ENCODE measurements at regions of chr11 and their contacts with region 1.

Region 1: GRCh38 chr11:1652771-1653540 is 23.4 kb downstream of the KRTAP5-5 start:
- DNase-seq: peak; percentile 60 to 86 (median 74)
- ATAC-seq: peak; percentile 98
- H3K4me3 ChIP-seq: no peak overlapping the region
- H3K4me3 Mint-ChIP-seq: no peak overlapping the region
- H3K27ac ChIP-seq: no peak overlapping the region
- H3K27ac Mint-ChIP-seq: no peak overlapping the region
- H3K4me1 ChIP-seq: peaks cover 6% of the 10 kb centered on the region
- H3K4me1 Mint-ChIP-seq: no peaks in the 10 kb centered on the region
- H3K27me3 ChIP-seq: no peaks in the 10 kb centered on the region
- H3K27me3 Mint-ChIP-seq: peaks cover 12% of the 10 kb centered on the region
- CTCF ChIP-seq: peak; percentile 98

Region 2: GRCh38 chr11:1727096-1727690 is 74.2 kb after region 1 on chr11:
- CTCF ChIA-PET with region 1: no interaction called
- POLR2A ChIA-PET with region 1: no interaction called
- intact Hi-C with region 1: no loop called
- DNase-seq: no peak
- ATAC-seq: no peak
- H3K4me3 ChIP-seq: no peak overlapping the region
- H3K4me3 Mint-ChIP-seq: no peak overlapping the region
- H3K27ac ChIP-seq: no peak overlapping the region
- H3K27ac Mint-ChIP-seq: no peak overlapping the region
- H3K4me1 ChIP-seq: peaks cover 7% of the 10 kb centered on the region
- H3K4me1 Mint-ChIP-seq: peaks cover 17% of the 10 kb centered on the region
- H3K27me3 ChIP-seq: peaks cover 9 to 19% of the 10 kb centered on the region in 2 experiments
- H3K27me3 Mint-ChIP-seq: peaks cover 44% of the 10 kb centered on the region
- CTCF ChIP-seq: no peak

Region 3: GRCh38 chr11:1832211-1832919 is 179.4 kb after region 1 on chr11:
- CTCF ChIA-PET with region 1: interaction called, 12 read pairs
- POLR2A ChIA-PET with region 1: interaction called, 4 read pairs
- intact Hi-C with region 1: loop called (anchors 1 to 2 kb)
- DNase-seq: peak; percentile 45 to 84 (median 64)
- ATAC-seq: peak; percentile 75
- H3K4me3 ChIP-seq: no peak overlapping the region
- H3K4me3 Mint-ChIP-seq: no peak overlapping the region
- H3K27ac ChIP-seq: no peak overlapping the region
- H3K27ac Mint-ChIP-seq: no peak overlapping the region
- H3K4me1 ChIP-seq: peaks cover 10% of the 10 kb centered on the region
- H3K4me1 Mint-ChIP-seq: no peaks in the 10 kb centered on the region
- H3K27me3 ChIP-seq: peaks cover 8 to 16% of the 10 kb centered on the region in 2 experiments
- H3K27me3 Mint-ChIP-seq: peaks cover 5% of the 10 kb centered on the region
- CTCF ChIP-seq: peak; percentile 97

Region 4: DNA sequence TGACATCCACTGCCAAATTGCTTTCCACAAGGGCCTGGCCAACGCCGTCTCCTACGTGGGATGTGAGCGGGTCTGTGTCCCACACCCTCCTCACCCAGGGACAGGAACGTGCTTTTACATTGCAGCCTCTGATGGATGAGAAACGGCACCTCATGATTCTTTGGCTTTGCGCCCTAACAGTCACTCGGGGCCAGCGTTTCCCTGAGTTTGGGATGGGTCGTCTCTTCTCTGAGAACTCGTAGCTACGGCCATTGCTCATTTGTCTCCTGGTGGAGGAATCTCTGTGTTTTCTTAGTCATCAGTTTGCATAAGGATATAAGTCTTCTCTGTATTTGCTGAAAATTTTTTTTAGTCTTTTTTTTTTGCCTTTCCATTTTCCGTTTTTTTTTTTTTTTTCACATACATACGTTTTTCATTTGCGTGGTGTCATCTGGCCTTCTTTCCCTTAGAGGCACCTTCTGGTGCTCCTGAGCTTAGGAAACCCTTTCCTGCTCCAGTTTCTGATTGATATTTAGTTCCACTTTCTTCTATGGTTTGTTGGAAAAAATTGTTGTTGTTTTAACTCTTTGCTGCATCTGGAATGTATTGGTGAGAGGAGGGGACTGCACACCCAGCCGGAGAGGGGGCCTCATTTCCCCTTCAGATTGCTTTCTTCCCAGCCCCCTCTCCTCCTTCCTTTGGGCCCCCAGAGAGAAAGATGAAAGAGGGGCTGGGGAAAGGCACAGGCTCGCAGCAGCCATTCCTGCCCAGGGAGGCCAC is 278.6 kb after region 1 on chr11:
- CTCF ChIA-PET with region 1: no interaction called
- POLR2A ChIA-PET with region 1: no interaction called
- intact Hi-C with region 1: no loop called
- DNase-seq: no peak
- ATAC-seq: no peak
- H3K4me3 ChIP-seq: no peak overlapping the region
- H3K4me3 Mint-ChIP-seq: no peak overlapping the region
- H3K27ac ChIP-seq: no peak overlapping the region
- H3K27ac Mint-ChIP-seq: no peak overlapping the region
- H3K4me1 ChIP-seq: peaks cover 6% of the 10 kb centered on the region
- H3K4me1 Mint-ChIP-seq: no peaks in the 10 kb centered on the region
- H3K27me3 ChIP-seq: no peaks in the 10 kb centered on the region
- H3K27me3 Mint-ChIP-seq: no peaks in the 10 kb centered on the region
- CTCF ChIP-seq: no peak

Region 5: GRCh38 chr11:2002807-2003206 is 349.9 kb after region 1 on chr11:
- CTCF ChIA-PET with region 1: interaction called, 15 read pairs
- POLR2A ChIA-PET with region 1: interaction called, 4 read pairs
- intact Hi-C with region 1: no loop called
- DNase-seq: no peak
- ATAC-seq: peak; percentile 60
- H3K4me3 ChIP-seq: no peak overlapping the region
- H3K4me3 Mint-ChIP-seq: no peak overlapping the region
- H3K27ac ChIP-seq: no peak overlapping the region
- H3K27ac Mint-ChIP-seq: no peak overlapping the region
- H3K4me1 ChIP-seq: no peaks in the 10 kb centered on the region
- H3K4me1 Mint-ChIP-seq: no peaks in the 10 kb centered on the region
- H3K27me3 ChIP-seq: no peaks in the 10 kb centered on the region
- H3K27me3 Mint-ChIP-seq: no peaks in the 10 kb centered on the region
- CTCF ChIP-seq: no peak